HAP-1 (cell line): ENCODE measurements at regions of chr1 and their contacts with region 1.

Region 1: GRCh38 chr1:201361652-201362504 is 15.6 kb downstream of the TNNT2 start:
- DNase-seq: peak; percentile 29 to 73
- H3K4me3 ChIP-seq: no peak overlapping the region
- H3K4me1 ChIP-seq: no peaks in the 10 kb centered on the region
- H3K27me3 ChIP-seq: peaks cover 7% of the 10 kb centered on the region

Region 2: DNA sequence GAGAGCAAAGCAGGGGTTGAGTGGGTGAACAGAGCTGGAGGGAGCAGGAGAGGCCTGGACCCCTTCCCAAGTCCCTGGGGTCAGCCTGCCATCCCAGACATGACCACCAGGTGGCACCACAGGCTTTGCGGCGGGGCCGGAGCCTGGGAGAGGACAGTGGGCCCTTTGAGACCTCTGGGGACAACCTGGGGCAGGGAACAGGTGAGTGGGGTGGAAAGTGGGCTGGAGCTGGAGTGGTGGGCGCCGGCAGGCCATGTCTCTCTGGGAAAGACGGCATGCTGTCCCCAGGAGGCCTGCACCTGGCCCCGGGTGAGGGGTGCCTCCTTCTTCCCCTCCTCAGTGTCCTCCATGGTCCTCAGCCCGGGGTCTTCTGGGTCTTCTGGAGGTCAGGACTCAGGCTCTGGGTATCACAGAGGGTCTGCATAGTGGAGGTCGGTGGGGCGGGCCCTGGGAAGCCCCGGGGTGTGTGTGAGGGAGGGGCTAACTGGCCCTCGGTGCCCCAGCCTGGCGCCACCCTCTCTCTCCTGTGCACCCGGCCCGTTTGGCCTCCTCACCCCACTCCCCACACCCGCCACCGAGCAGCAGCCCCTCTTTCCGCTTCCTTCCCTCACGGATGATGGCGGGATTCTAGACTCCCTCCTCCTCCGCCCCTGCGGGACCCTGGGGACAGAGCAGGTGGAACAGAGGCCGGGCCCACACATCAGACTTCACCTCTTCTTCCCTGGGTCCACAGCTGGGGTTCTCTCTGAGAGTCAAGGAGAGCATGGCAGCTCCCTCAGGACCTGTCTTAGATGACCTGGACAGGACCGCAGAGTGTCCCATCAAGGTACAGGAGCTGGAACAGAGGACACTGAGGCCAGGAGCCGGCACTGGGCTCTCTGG is 107.0 kb before region 1 on chr1:
- in situ Hi-C with region 1: loop called (anchors 5 kb)
- DNase-seq: peak; percentile 20 to 88
- H3K4me3 ChIP-seq: no peak overlapping the region
- H3K4me1 ChIP-seq: no peaks in the 10 kb centered on the region
- H3K27me3 ChIP-seq: no peaks in the 10 kb centered on the region

Region 3: DNA sequence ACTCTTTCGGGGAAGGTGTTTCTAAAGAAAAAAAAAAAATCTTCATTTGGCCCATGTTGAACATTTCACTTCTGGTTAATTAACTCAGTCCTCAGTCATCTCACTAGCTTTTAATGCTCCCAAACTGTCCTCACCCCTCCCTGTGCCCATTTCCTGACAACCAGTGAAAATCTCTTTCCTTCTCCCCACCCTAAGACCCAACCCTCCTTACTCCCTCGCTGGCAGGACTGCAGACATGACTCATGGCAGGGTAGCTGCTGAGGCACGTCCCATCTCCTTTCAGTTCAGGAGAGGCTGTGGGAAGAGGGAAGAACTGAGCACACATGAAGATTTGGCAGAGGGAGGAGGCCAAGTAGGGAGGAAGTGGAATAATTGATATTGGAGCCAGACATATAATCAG is 66.0 kb before region 1 on chr1:
- in situ Hi-C with region 1: no loop called
- DNase-seq: no peak
- H3K4me3 ChIP-seq: no peak overlapping the region
- H3K4me1 ChIP-seq: peaks cover 8% of the 10 kb centered on the region
- H3K27me3 ChIP-seq: no peaks in the 10 kb centered on the region; the same call in 1 of the 2 replicates